ENCODE measurements at regions of chr3 and their contacts with region 1.

Region 1: DNA sequence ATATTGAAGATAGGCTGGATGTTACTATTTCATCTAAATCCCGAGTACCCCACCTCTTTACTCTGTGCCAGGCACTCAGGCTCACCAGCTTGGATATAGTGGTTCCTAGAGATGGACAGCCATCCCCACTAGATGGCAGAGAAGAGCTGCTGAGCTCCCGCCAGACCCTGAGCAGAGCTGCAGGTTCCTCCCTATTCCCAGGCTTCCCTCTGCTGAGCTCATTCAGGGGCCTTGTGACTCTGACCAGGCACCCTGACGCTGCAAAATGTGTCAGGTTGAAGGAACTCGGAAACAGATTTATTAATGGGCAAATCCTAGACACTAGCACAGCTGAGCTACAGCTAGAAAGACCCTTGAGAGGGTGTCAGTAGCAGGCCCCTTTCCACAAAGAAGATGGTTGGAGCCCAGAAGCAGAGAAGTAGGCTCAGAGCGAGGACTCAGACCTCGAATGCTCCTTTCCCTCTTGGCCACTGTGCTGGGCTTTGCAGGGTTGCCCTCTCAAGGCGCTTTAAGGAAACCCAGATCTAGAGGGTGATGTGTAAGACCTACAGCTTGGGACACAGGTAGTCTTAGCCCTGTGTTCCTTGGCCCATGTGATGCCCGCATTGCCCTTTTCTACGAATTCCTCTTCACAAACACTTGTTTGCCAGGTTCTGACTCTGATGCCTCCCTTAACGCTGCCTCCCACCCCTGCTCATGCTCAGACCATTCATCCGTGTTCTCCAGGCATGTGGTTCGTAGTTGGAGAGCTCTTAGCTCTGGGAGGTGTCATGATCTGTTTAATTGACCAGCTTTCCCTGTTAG is 38.0 kb upstream of the RHO start:
- DNase-seq: peak; percentile 76
- ATAC-seq: peak; percentile 91
- H3K4me3 Mint-ChIP-seq: no peak overlapping the region
- H3K27ac Mint-ChIP-seq: peak overlapping the region; percentile 28
- H3K4me1 Mint-ChIP-seq: peaks cover 42% of the 10 kb centered on the region
- H3K27me3 Mint-ChIP-seq: no peaks in the 10 kb centered on the region; the same call in none of the 2 replicates
- CTCF ChIP-seq: peak; percentile 69

Region 2: DNA sequence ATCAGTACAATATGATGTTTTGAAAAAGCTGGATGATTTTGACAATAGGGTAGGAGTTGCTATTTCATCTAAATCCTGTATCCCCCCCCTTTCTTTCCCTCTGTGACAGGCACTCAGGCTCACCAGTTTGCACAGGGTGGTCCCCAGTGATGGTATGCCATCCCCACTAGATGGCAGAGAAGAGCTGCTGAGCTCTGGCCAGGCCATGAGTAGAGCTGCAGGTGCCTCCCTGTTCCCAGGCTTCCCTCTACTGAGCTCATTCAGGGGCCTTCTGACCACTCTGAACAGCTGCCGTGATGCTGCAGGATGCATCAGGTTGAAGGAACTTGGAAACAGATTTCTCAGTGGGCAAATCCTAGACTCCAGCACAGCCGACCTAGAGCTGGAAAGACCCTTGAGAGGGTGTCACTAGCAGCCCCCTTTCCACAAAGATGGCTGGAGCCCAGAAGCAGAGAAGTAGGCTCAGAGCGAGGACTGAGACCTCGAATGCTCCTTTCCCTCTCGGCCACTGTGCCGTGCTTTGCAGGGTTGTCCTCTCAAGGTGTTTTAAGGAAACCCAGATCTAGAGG is 107.1 kb before region 1 on chr3:
- CTCF ChIA-PET with region 1: interaction called, 31 read pairs
- POLR2A ChIA-PET with region 1: no interaction called
- DNase-seq: peak; percentile 77
- ATAC-seq: peak; percentile 98
- H3K4me3 Mint-ChIP-seq: no peak overlapping the region
- H3K27ac Mint-ChIP-seq: no peak overlapping the region
- H3K4me1 Mint-ChIP-seq: peaks cover 13% of the 10 kb centered on the region
- H3K27me3 Mint-ChIP-seq: no peaks in the 10 kb centered on the region; the same call in 1 of the 2 replicates
- CTCF ChIP-seq: peak; percentile 58

Region 3: GRCh38 chr3:129417326-129417725 is 73.1 kb before region 1 on chr3:
- CTCF ChIA-PET with region 1: no interaction called
- POLR2A ChIA-PET with region 1: no interaction called
- DNase-seq: no peak
- ATAC-seq: no peak
- H3K4me3 Mint-ChIP-seq: no peak overlapping the region
- H3K27ac Mint-ChIP-seq: no peak overlapping the region
- H3K4me1 Mint-ChIP-seq: 0 out of 2 replicates have a peak, but pooled peaks cover 3% of the 10 kb centered on the region
- H3K27me3 Mint-ChIP-seq: peaks cover 26% of the 10 kb centered on the region
- CTCF ChIP-seq: no peak

Region 4: DNA sequence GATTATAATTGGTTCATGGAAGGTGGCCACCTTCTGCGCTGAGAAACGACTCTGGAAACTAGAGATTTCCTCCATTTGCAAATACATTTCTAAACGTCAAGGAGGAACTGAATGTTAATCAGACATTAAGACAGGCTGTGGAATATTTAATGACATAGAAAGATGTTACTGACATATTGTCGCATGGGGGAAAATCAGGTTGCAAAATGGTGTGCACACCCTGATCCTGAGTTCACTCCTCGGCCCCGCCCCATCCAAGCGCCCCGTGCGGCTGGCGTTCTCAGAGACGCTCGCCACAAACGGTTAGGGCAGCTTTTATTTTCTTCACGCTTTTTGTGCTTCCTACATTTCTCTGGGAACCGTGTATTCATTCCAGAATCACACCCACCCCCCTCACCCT is 63.3 kb after region 1 on chr3:
- CTCF ChIA-PET with region 1: interaction called, 12 read pairs
- POLR2A ChIA-PET with region 1: no interaction called
- DNase-seq: no peak
- ATAC-seq: no peak
- H3K4me3 Mint-ChIP-seq: no peak overlapping the region
- H3K27ac Mint-ChIP-seq: no peak overlapping the region
- H3K4me1 Mint-ChIP-seq: peaks cover 36% of the 10 kb centered on the region
- H3K27me3 Mint-ChIP-seq: no peaks in the 10 kb centered on the region
- CTCF ChIP-seq: no peak

Region 5: DNA sequence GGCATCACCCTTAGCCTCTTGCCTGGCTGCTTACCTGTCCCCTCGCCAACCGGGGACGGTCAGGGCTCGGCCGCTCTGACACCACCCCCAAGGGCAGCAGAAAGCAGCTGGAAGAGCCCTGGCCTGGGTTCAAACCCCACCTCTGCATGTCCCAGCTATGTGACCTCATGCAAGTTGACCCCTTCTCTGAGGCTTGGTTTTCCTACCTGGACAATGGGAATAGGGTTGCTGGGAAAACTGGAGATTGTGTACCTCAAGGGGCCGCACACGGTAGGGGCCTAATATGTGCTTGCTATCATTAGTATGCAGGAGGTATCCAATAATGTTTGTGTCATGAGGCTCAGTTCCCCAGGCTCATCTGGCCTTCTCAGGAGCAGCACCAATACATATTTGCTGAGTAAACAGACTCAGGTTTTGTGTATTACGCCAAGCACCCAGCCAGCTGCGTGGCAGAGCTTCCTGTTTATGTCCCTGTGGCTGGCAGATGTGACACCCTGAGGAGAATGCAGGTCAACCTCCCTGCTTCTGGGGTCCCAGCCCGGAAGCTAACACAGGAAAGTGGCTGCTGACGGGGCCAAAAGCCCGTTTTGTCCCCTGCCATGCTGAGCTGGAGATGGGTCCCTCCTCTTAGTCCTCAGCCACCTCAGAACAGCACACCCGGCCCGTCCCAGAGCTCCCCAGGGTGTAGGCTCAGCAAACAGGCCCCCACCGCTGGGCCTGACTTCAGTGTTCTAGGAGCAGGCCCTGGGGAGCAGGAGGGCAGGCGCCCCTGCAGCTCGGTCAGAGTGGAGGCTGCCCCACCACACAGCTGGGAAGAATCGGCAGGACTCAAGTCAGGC is 86.3 kb after region 1 on chr3:
- CTCF ChIA-PET with region 1: interaction called, 12 read pairs
- POLR2A ChIA-PET with region 1: no interaction called
- DNase-seq: no peak
- ATAC-seq: no peak
- H3K4me3 Mint-ChIP-seq: no peak overlapping the region
- H3K27ac Mint-ChIP-seq: peak overlapping the region; percentile 10; the same call in 1 of the 2 replicates
- H3K4me1 Mint-ChIP-seq: peaks cover 11% of the 10 kb centered on the region
- H3K27me3 Mint-ChIP-seq: no peaks in the 10 kb centered on the region
- CTCF ChIP-seq: no peak

Region 6: DNA sequence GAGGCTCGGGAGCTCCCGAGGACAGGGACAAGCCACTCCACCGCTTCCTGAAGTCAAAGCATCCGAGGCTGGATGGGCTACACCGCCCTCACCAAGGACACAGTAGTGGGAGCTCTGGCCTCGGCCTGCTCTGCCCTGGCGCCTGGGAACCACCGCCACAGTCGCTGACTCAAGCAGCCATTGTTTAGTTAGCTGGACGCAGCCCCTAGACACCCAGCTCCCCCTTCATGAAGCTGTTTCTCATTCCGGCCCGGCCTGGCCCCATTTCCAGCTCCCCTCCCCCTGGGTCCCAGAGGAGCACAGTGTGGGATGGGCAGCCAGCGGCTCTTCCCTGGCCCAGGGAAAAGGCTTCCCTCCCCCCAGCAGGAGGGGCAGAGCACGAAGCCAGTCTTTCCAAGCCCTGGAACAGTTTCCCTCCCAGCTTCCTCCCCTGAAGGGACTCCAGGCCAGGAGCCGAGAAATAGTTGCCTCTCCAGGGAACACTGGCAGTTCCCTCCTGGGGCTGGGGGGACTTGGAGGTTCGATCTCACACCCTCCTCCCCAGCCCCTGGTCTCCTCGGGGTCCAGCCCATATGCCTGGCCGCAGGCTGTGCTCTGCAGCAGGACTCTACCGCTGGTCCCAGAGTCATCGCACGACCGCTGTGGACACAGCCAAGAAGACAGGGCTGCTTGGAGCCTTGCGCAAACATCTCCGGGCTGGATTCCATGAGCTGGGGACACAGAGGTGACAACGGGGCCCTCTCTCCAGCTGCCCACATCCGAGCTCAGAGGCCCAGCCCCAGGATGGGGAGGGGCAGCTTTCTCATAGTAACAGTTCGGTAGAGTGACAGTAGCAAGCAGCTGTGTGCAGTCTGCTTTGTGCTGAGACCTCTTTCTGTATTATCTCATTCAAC is 106.0 kb after region 1 on chr3:
- CTCF ChIA-PET with region 1: interaction called, 47 read pairs
- POLR2A ChIA-PET with region 1: no interaction called
- DNase-seq: no peak
- ATAC-seq: peak; percentile 7
- H3K4me3 Mint-ChIP-seq: no peak overlapping the region
- H3K27ac Mint-ChIP-seq: no peak overlapping the region; the same call in 1 of the 2 replicates
- H3K4me1 Mint-ChIP-seq: peaks cover 82% of the 10 kb centered on the region
- H3K27me3 Mint-ChIP-seq: no peaks in the 10 kb centered on the region
- CTCF ChIP-seq: no peak

Region 7: DNA sequence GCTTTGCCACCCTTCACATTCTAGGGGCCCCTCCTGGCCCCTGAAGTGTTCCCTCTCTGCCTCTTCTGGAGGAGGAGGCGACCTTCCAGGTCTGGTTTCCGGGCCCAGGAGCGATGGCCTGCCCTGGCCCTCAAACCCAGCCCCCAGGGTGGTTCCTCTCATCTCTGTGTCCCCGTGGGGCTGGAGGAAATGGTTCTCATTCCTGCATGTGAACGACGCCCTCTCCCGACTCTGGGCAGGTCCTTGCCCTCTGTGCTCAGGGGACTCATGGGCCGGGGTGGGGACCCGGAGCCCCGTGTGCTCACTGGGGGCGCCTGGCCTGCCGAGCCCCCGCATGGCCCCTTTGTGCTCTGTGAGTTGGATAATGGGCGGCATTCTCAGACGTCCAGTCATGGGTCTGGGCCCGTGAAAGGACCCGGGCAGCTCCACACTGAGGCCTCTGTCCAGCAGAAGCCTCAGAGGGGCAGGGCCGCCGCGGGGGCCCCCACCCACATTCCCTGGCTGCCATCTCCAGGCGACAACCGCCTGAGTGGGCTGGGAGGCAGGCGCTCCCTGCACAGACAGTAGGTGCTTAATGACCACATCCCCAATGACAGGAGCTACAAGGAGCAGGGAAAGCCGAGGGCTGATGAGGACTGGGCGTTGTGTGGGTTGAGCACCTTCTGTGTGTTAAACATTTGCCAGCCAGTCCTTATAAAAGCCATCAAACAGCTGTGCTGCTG is 121.5 kb after region 1 on chr3:
- CTCF ChIA-PET with region 1: interaction called, 30 read pairs
- POLR2A ChIA-PET with region 1: no interaction called
- DNase-seq: peak; percentile 60
- ATAC-seq: peak; percentile 72
- H3K4me3 Mint-ChIP-seq: no peak overlapping the region
- H3K27ac Mint-ChIP-seq: peak overlapping the region; percentile 74
- H3K4me1 Mint-ChIP-seq: peaks cover 39% of the 10 kb centered on the region
- H3K27me3 Mint-ChIP-seq: peaks cover 8% of the 10 kb centered on the region
- CTCF ChIP-seq: no peak

Region 8: GRCh38 chr3:129632977-129633376 is 142.5 kb after region 1 on chr3:
- CTCF ChIA-PET with region 1: interaction called, 84 read pairs
- POLR2A ChIA-PET with region 1: no interaction called
- DNase-seq: no peak
- ATAC-seq: no peak
- H3K4me3 Mint-ChIP-seq: no peak overlapping the region
- H3K27ac Mint-ChIP-seq: no peak overlapping the region
- H3K4me1 Mint-ChIP-seq: peaks cover 6% of the 10 kb centered on the region
- H3K27me3 Mint-ChIP-seq: no peaks in the 10 kb centered on the region
- CTCF ChIP-seq: no peak